ENCODE measurements at regions of chr2 and their contacts with region 1.

Region 1: GRCh38 chr2:162890690-162891311 is 52.2 kb upstream of the KCNH7 start:
- DNase-seq: peak in 5 of 7 donors; percentile 8 to 36 (median 24)
- H3K4me3 ChIP-seq: no peak overlapping the region
- H3K27ac ChIP-seq: no peak overlapping the region
- H3K4me1 ChIP-seq: no peaks in the 10 kb centered on the region
- H3K27me3 ChIP-seq: no peaks in the 10 kb centered on the region
- CTCF ChIP-seq: peak; percentile 31 to 67 (median 50)
- POLR2A ChIP-seq: no peak

Region 2: DNA sequence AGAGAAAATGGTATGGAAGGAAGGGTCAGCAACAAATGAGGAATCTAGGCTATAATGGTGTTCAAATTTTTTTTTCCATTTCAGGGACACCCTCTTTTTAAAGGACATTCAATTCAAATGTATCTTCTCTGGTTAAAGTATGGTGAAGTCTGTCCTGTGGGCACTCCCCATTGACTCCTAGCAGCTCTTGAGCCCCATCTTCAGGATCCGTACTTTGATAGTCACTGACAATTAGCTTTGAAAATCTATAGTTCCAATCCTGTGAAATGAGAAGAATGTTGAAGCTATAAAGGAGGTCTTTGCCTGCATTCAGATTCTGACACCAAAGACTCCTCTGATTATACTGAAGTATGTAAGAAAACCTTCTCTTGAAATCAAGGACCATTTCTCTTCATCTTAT is 95.5 kb before region 1 on chr2:
- intact Hi-C with region 1: no loop called
- DNase-seq: peak in 1 of 7 donors; percentile 16
- H3K4me3 ChIP-seq: no peak overlapping the region
- H3K27ac ChIP-seq: no peak overlapping the region
- H3K4me1 ChIP-seq: no peaks in the 10 kb centered on the region
- H3K27me3 ChIP-seq: no peaks in the 10 kb centered on the region
- CTCF ChIP-seq: peak in 3 of 6 experiments; percentile 8 to 20 (median 16)
- POLR2A ChIP-seq: no peak

Region 3: DNA sequence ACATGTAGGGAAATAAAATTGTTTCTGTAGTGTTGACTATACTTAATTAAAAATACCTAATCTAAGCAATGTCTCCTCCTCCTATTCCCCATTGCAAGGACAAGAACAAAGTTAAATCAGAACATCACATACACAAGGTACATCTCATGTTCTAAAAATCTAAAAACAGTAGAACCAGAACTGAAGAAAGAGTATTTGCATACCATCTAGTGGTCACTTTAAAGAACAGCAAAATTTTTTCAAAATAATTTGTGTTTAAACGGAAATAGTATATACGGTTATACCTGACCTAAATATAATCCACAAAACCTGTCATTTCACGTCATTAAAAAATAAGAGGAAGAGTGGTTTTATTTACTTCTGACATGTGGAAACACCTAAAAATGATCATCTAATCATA is 242.0 kb after region 1 on chr2:
- intact Hi-C with region 1: loop called in 1 of 2 experiments (anchors 10 kb)
- DNase-seq: no peak
- H3K4me3 ChIP-seq: no peak overlapping the region
- H3K27ac ChIP-seq: no peak overlapping the region
- H3K4me1 ChIP-seq: no peaks in the 10 kb centered on the region
- H3K27me3 ChIP-seq: no peaks in the 10 kb centered on the region
- CTCF ChIP-seq: peak in 5 of 6 experiments; percentile 16 to 53 (median 44)
- POLR2A ChIP-seq: no peak

Measured in adrenal gland (tissue), 19 donors.